ENCODE measurements at regions of chr10 and their contacts with region 1.

Region 1: DNA sequence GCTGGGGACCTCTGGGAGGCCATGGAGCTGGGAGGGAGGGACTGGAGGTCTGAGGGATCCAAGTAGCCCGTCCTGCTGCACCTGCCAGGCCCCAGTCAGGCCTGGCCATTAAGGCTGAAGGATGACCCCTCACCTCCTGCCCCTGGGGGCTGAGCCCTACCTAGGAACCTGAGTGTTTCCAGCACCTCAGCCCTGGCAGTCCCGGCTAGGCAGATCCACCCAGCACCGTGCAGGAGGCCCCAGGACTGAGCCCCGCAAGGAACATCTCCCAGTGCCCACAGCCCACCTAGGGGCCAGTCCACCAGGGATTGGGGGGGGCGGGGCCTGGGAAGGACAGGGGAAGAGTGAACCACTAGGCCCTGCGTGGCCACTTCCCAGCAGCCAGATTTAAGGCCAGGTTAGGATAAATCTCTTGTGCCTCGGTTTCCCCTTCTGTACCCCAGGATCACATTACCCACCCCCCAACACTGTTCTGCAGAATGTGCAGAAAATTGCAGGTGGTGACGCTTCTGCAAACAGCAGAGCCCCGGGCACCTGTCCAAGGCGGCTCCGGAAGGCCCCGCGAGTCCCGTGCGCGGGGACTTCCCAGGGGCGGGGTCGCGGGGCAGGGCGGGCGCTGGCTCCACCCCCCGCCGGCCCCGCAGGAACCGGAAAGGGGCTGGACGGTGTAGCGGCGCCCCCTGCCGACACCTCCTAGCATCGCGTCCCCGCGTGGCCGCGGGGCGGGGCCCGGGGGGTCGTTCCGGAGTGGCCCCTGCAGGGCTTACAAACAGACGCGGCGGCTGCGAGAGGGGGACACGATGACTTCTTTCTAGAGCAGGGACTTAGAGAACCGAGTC is 55.9 kb downstream of the PWWP2B start:
- DNase-seq: no peak
- ATAC-seq: peak; percentile 71
- H3K4me3 ChIP-seq: peak overlapping the region; percentile 6 to 44; a peak in 2 of 4 replicates
- H3K27ac ChIP-seq: peak overlapping the region; percentile 67
- H3K4me1 ChIP-seq: peaks cover 46% of the 10 kb centered on the region
- H3K27me3 ChIP-seq: no peaks in the 10 kb centered on the region
- CTCF ChIP-seq: peak; percentile 100

Region 2: DNA sequence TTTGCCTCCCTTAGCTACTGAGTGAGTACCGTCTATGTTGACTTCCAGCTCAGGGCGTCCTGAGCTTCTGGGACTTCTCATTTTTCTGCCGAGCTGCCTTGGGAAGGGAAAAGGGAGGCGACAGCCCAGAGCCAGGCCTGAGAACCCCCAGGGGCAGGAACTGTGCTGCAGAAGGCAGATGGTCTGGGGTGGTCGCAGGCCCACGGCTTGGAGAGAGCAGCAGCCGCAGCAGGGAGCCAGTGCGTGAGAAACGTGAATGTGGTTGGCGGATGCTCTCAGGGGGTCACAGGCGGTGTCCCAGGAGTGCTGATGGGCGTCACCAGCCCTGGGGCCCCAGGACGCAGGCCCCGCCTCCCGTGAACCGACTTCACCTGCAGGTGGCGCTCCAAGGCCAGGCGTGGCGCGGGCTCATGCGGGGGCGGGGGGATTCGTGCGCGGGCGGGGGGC is 65.1 kb before region 1 on chr10:
- CTCF ChIA-PET with region 1: interaction called, 5 read pairs
- POLR2A ChIA-PET with region 1: no interaction called
- in situ Hi-C with region 1: no loop called
- intact Hi-C with region 1: loop called (anchors 2 kb)
- DNase-seq: no peak
- ATAC-seq: peak; percentile 64
- H3K4me3 ChIP-seq: peak overlapping the region in 1 of 2 experiments; percentile 20; a peak in 1 of 4 replicates
- H3K27ac ChIP-seq: peak overlapping the region; percentile 68
- H3K4me1 ChIP-seq: peaks cover 25% of the 10 kb centered on the region
- H3K27me3 ChIP-seq: no peaks in the 10 kb centered on the region
- CTCF ChIP-seq: peak; percentile 81; the same call in 1 of the 2 replicates

Region 3: GRCh38 chr10:132793871-132794849 is 341.3 kb after region 1 on chr10:
- CTCF ChIA-PET with region 1: no interaction called
- POLR2A ChIA-PET with region 1: no interaction called
- in situ Hi-C with region 1: no loop called
- intact Hi-C with region 1: loop called (anchors 10 kb)
- DNase-seq: no peak
- ATAC-seq: peak; percentile 52
- H3K4me3 ChIP-seq: peak overlapping the region in 1 of 2 experiments; percentile 21; a peak in 2 of 4 replicates
- H3K27ac ChIP-seq: no peak overlapping the region
- H3K4me1 ChIP-seq: peaks cover 5% of the 10 kb centered on the region
- H3K27me3 ChIP-seq: no peaks in the 10 kb centered on the region
- CTCF ChIP-seq: peak; percentile 75; the same call in 1 of the 2 replicates

Measured in Panc1 (cell line).